ENCODE measurements at regions of chr17 and their contacts with region 1.

Region 1: DNA sequence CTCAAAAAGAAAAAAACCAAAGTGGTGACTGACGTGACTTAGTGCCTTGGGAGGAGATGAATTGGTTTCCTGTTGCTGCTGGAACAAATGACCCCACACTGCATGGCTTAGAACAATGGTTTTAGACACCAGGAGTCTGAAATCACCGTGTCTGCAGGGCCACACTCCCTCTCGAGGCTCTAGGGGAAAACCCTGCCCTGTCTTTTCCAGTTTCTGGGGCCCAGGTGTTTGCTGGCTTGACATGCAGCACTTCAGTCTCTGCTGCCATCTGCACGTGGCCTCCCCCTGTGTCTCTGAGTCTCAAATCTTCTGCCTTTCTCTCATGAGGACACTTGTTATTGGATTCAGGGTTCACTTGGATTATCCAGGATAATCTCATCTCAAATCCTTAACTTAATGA is 323.8 kb upstream of the TNRC6C start:
- DNase-seq: peak; percentile 82
- H3K4me3 Mint-ChIP-seq: no peak overlapping the region
- H3K27ac Mint-ChIP-seq: peak overlapping the region; percentile 74
- H3K4me1 Mint-ChIP-seq: peaks cover 15% of the 10 kb centered on the region
- H3K27me3 Mint-ChIP-seq: peaks cover 4% of the 10 kb centered on the region

Region 2: DNA sequence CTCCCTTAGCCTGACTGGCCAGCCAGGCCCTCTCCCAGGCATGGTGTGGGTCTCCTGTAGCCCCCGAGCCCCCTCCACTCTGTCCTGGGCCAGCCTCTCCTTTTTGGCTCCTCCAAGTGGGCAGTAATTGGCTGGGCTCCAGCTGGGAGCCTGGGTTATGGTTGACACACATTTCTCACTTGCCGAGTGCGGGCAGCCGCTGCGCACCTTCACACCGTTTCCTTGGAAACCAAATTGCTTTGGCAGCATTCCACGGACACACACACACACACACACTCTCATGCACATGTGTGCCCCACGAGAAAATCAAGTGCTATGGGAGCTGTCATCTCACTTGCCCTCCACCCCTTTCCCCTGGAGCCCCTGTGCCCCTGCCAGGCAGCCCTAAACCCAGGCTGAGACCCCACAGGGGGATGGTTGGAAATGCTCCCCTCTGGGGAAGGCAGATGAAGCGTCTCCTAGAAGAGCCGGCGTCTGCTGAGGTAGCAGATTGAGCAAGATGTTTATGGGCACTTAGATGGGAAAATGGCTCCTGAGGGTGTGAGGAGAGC is 78.9 kb before region 1 on chr17:
- intact Hi-C with region 1: no loop called
- DNase-seq: no peak
- H3K4me3 Mint-ChIP-seq: no peak overlapping the region
- H3K27ac Mint-ChIP-seq: no peak overlapping the region
- H3K4me1 Mint-ChIP-seq: no peaks in the 10 kb centered on the region
- H3K27me3 Mint-ChIP-seq: peaks cover 24% of the 10 kb centered on the region

Region 3: DNA sequence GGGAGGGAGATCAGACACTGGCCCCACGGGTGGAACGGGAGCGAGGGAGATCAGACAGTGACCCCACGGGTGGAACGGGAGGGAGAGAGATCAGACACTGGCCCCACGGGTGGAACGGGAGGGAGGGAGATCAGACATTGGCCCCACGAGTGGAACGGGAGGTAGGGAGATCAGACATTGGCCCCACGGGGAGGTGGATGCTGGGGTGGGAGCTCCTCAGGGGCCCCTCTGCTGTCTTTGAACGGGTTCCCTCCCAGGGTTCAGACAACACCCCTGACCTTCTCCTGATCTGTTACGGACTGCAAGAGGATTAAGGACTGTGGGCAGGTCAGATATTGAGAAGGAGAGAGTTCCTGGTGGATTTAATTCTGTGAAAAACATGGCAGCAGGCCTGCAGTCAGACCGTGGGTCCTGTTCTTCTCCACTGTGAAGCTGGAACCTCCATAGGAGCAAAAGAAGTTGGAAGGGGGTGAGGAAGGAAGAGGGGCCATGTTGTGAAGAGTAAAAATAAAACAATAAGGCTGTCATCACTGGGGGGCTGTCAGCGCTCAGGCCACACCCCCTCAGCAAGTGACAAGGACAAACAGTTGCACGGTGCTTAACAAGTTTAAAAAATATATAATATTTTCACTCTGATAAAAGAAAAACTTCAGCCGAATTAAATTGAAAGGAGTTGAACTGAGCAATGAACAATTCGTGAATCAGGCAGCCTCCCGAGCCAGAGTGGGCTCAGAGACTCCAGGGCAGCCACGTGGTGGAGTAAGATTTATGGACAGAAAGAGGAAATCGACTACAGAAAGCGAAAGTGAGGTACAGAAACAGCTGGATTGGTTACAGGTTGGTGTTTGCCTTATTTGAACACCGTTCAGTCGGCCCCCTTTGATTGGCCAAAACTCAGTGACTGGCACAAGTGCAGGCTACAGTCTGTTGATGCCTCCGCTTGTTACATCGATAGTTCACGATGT is 24.9 kb before region 1 on chr17:
- intact Hi-C with region 1: loop called (anchors 1 kb)
- DNase-seq: peak; percentile 91
- H3K4me3 Mint-ChIP-seq: peak overlapping the region; percentile 73
- H3K27ac Mint-ChIP-seq: peak overlapping the region; percentile 90
- H3K4me1 Mint-ChIP-seq: peaks cover 21% of the 10 kb centered on the region
- H3K27me3 Mint-ChIP-seq: peaks cover 12% of the 10 kb centered on the region

Region 4: GRCh38 chr17:77666881-77667395 is 32.2 kb after region 1 on chr17:
- intact Hi-C with region 1: loop called (anchors 5 kb)
- DNase-seq: peak; percentile 95
- H3K4me3 Mint-ChIP-seq: peak overlapping the region; percentile 88
- H3K27ac Mint-ChIP-seq: peak overlapping the region; percentile 97
- H3K4me1 Mint-ChIP-seq: peaks cover 34% of the 10 kb centered on the region
- H3K27me3 Mint-ChIP-seq: no peaks in the 10 kb centered on the region

Region 5: DNA sequence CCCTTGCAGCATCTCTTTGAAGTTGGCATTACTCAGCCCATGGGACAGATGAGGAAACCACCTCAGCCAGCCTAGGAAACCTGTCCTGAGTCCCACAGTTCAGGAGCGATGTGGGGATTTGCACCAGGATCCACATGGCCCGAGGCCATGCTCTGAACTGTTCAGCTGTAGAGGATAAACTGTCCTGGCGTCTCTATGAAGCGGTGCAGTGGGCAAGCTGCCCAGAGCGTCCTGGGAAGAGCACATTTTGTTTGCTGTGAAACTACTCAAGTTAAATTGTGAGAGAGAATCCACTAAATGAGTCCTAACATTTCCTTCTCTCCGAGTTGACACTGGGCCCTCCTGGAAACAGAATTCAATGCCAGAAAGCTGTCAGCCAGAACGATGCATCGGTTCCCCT is 47.2 kb after region 1 on chr17:
- intact Hi-C with region 1: no loop called
- DNase-seq: no peak
- H3K4me3 Mint-ChIP-seq: no peak overlapping the region
- H3K27ac Mint-ChIP-seq: no peak overlapping the region
- H3K4me1 Mint-ChIP-seq: peaks cover under 1% of the 10 kb centered on the region
- H3K27me3 Mint-ChIP-seq: no peaks in the 10 kb centered on the region

Region 6: GRCh38 chr17:77842528-77843147 is 207.9 kb after region 1 on chr17:
- intact Hi-C with region 1: loop called (anchors 10 kb)
- DNase-seq: no peak
- H3K4me3 Mint-ChIP-seq: peak overlapping the region; percentile 3
- H3K27ac Mint-ChIP-seq: peak overlapping the region; percentile 89
- H3K4me1 Mint-ChIP-seq: peaks cover 45% of the 10 kb centered on the region
- H3K27me3 Mint-ChIP-seq: peaks cover 15% of the 10 kb centered on the region

Measured in activated CD4-positive, alpha-beta T cell treated with anti-CD3 and anti-CD28 coated beads, Interleukin-2, amount 10 ng/mL, durations not matched to agents 24 days and 14 days (primary cell).